ENCODE measurements at regions of chr1 and their contacts with region 1.

Region 1: DNA sequence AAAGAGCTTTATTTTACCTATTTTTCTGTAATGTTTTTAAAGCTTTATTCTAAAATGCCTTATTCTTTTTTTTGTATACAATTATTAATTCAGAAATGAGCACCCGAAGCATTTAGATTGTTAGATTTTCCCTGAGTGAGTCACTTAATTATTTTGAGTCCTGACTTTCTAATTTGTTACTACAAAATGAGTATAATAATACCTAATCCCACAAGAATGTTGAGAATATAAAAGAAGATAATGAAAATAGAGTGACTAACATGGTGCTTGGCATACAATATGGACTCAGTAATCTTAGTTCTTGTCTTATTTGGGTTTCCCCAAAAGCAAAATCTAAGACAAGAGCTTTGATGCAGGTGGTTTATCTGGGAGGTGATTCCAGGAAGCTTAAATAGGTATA is 142.2 kb downstream of the LHX8 start:
- DNase-seq: no peak
- ATAC-seq: no peak
- H3K4me3 ChIP-seq: no peak overlapping the region
- H3K4me3 Mint-ChIP-seq: no peak overlapping the region
- H3K27ac ChIP-seq: no peak overlapping the region
- H3K27ac Mint-ChIP-seq: no peak overlapping the region
- H3K4me1 ChIP-seq: no peaks in the 10 kb centered on the region
- H3K4me1 Mint-ChIP-seq: no peaks in the 10 kb centered on the region
- H3K27me3 ChIP-seq: no peaks in the 10 kb centered on the region
- H3K27me3 Mint-ChIP-seq: no peaks in the 10 kb centered on the region
- CTCF ChIP-seq: no peak

Region 2: DNA sequence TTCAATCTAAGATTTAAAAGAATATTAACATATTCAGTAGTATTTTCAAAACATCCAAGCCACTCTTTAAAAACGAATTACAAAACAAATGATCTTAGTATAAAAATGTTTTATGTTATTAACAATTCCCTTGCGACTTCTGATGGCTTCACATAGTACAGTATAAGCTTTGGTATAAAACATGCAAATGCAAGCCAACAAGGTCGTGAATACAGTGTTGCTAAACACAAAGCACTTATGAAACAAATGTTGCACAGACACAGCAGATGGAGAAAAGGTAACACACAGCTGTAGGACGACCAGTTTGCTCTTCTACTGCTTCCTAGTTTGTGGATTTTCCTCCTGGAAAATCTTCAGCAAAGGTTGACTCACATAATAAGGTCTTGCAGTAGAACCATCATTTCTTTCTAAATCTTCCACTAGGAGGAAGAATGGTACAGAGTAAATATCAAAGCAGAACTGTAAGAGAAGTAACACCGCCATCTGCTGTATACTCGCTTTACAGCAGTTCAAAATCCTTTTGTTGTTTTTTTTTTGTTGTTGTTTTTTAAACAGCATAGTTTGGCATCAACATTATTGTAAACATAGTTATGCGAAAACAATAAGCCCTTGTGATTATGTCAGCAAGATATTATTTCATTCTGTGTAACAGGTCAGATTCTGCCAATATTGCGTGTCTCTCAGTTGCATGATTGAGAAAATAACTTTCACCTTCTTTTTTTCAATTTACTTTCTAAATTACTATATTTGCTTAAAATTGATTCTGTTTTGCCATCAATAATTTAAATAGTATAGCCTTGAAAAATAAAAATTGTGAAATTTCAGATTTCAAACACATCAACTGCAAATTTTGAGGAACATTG is 72.7 kb before region 1 on chr1:
- CTCF ChIA-PET with region 1: no interaction called
- POLR2A ChIA-PET with region 1: no interaction called
- intact Hi-C with region 1: no loop called
- DNase-seq: peak in 1 of 9 experiments; percentile 1
- ATAC-seq: no peak
- H3K4me3 ChIP-seq: no peak overlapping the region
- H3K4me3 Mint-ChIP-seq: no peak overlapping the region
- H3K27ac ChIP-seq: no peak overlapping the region
- H3K27ac Mint-ChIP-seq: no peak overlapping the region
- H3K4me1 ChIP-seq: no peaks in the 10 kb centered on the region
- H3K4me1 Mint-ChIP-seq: no peaks in the 10 kb centered on the region
- H3K27me3 ChIP-seq: no peaks in the 10 kb centered on the region
- H3K27me3 Mint-ChIP-seq: no peaks in the 10 kb centered on the region
- CTCF ChIP-seq: no peak

Region 3: DNA sequence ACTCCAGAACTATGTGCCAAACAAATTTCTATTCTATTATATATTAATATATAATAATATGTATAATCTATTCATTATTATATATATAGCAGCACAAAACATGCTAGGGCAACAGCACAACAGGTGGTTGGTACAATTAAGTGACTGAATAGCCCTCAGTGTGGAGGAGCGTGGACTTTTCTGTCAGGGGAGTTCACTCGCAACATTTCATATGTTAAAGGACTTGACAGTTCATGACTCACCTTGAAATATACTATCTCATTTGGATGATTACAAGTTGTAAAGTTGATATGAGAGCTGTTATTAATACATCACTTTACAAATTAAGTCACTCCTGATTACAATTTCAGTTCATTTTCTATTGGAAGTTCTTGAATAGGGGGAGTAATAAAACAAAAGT is 36.2 kb after region 1 on chr1:
- CTCF ChIA-PET with region 1: no interaction called
- POLR2A ChIA-PET with region 1: no interaction called
- intact Hi-C with region 1: loop called in 1 of 2 experiments (anchors 1 kb)
- DNase-seq: no peak
- ATAC-seq: no peak
- H3K4me3 ChIP-seq: no peak overlapping the region
- H3K4me3 Mint-ChIP-seq: no peak overlapping the region
- H3K27ac ChIP-seq: no peak overlapping the region
- H3K27ac Mint-ChIP-seq: no peak overlapping the region
- H3K4me1 ChIP-seq: no peaks in the 10 kb centered on the region
- H3K4me1 Mint-ChIP-seq: no peaks in the 10 kb centered on the region
- H3K27me3 ChIP-seq: no peaks in the 10 kb centered on the region
- H3K27me3 Mint-ChIP-seq: no peaks in the 10 kb centered on the region
- CTCF ChIP-seq: no peak

Region 4: GRCh38 chr1:75438355-75438754 is 162.0 kb after region 1 on chr1:
- CTCF ChIA-PET with region 1: no interaction called
- POLR2A ChIA-PET with region 1: no interaction called
- intact Hi-C with region 1: no loop called
- DNase-seq: no peak
- ATAC-seq: no peak
- H3K4me3 ChIP-seq: no peak overlapping the region
- H3K4me3 Mint-ChIP-seq: no peak overlapping the region
- H3K27ac ChIP-seq: no peak overlapping the region
- H3K27ac Mint-ChIP-seq: no peak overlapping the region
- H3K4me1 ChIP-seq: no peaks in the 10 kb centered on the region
- H3K4me1 Mint-ChIP-seq: no peaks in the 10 kb centered on the region
- H3K27me3 ChIP-seq: no peaks in the 10 kb centered on the region
- H3K27me3 Mint-ChIP-seq: no peaks in the 10 kb centered on the region
- CTCF ChIP-seq: no peak